Activated B cell treated with CpG ODN at 0.5 μM for 24 hours (primary cell): ENCODE measurements at regions of chr2 and their contacts with region 1.

Region 1: GRCh38 chr2:226906163-226906693 is 70.4 kb downstream of the RHBDD1 start:
- DNase-seq: no peak
- ATAC-seq: peak; percentile 84
- H3K4me3 Mint-ChIP-seq: peak overlapping the region; percentile 73
- H3K27ac Mint-ChIP-seq: peak overlapping the region; percentile 94
- H3K4me1 Mint-ChIP-seq: peaks cover 97% of the 10 kb centered on the region
- H3K27me3 Mint-ChIP-seq: no peaks in the 10 kb centered on the region
- CTCF ChIP-seq: no peak

Region 2: DNA sequence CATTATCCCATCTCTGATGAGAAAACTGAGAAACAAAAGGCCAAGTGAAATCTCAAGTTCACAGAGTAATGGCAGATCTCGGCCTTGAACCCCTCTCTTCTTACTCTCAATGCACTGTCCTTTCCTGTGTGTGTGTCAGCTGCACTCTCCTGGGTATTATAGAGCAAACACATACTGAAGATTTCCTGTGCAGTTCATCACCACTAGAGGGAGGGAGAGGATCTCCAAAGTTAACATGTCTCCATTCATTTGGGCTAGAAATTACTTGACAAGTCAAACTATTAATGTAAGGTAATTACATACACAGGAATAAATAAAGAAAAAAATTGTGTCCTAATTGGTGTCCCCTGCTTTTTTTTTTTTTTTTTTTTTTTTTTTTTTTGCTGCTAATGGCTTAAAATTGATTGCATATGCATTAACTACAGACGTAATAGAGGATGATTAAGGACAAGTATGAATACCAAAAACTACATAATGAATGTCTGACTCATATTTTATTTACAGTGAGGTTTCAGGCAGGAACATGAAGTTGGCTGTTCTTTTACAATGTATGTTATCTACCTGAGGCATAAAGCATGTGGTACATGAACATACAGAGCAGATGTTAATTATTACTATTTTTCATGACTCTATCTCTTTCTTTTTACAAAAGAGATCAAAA is 1237.5 kb before region 1 on chr2:
- CTCF ChIA-PET with region 1: no interaction called
- POLR2A ChIA-PET with region 1: no interaction called
- intact Hi-C with region 1: loop called (anchors 5 kb)
- DNase-seq: no peak
- ATAC-seq: peak; percentile 79
- H3K4me3 Mint-ChIP-seq: no peak overlapping the region
- H3K27ac Mint-ChIP-seq: no peak overlapping the region
- H3K4me1 Mint-ChIP-seq: no peaks in the 10 kb centered on the region
- H3K27me3 Mint-ChIP-seq: peaks cover 5% of the 10 kb centered on the region
- CTCF ChIP-seq: peak; percentile 29

Region 3: GRCh38 chr2:226835796-226836547 is 70.3 kb before region 1 on chr2 and contains the start of gene RHBDD1:
- CTCF ChIA-PET with region 1: interaction called, 5 read pairs
- POLR2A ChIA-PET with region 1: interaction called, 35 read pairs
- intact Hi-C with region 1: loop called (anchors 1 kb)
- DNase-seq: peak; percentile 93
- ATAC-seq: peak; percentile 86
- H3K4me3 Mint-ChIP-seq: peak within 1 kb of the TSS; percentile 90
- H3K27ac Mint-ChIP-seq: peak within 1 kb of the TSS; percentile 97
- H3K4me1 Mint-ChIP-seq: peaks cover 69% of the 10 kb centered on the region
- H3K27me3 Mint-ChIP-seq: no peaks in the 10 kb centered on the region
- CTCF ChIP-seq: no peak
- total RNA-seq, gene RHBDD1: 71.1 and 90.2 TPM in 2 replicates

Region 4: DNA sequence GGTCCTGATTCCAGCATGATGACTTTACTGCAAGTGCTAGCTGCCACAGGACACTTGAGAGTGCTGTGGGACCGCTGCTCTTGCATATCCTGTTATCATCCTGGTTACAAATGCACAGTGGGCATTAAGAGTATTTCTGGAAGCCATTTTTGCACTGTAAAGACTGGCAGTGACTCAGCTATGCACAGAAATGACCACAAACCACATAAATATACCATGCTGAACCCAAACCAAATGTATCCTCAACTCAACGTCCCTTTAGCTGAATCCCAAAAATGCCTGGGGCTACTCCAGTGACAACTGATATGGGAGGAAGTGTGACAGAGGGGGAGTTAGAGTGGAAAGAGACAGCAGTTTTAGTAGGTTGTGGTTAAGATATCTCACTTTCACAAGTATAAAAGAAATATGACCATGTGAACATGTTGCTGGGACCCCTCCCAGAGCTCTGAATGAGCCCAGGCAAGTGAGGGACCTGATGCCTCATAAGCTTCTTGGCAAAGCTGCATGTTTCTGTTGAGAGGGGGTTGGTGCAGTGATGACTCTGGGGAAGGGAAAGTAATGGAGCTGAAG is 33.1 kb before region 1 on chr2:
- CTCF ChIA-PET with region 1: no interaction called
- POLR2A ChIA-PET with region 1: interaction called, 3 read pairs
- intact Hi-C with region 1: loop called (anchors 5 kb)
- DNase-seq: no peak
- ATAC-seq: no peak
- H3K4me3 Mint-ChIP-seq: no peak overlapping the region
- H3K27ac Mint-ChIP-seq: no peak overlapping the region
- H3K4me1 Mint-ChIP-seq: peaks cover 34% of the 10 kb centered on the region
- H3K27me3 Mint-ChIP-seq: no peaks in the 10 kb centered on the region
- CTCF ChIP-seq: no peak

Region 5: GRCh38 chr2:226916669-226917068 is 10.4 kb after region 1 on chr2:
- CTCF ChIA-PET with region 1: no interaction called
- POLR2A ChIA-PET with region 1: interaction called, 4 read pairs
- intact Hi-C with region 1: loop called (anchors 1 kb)
- DNase-seq: no peak
- ATAC-seq: peak; percentile 57
- H3K4me3 Mint-ChIP-seq: peak overlapping the region; percentile 52
- H3K27ac Mint-ChIP-seq: peak overlapping the region; percentile 89
- H3K4me1 Mint-ChIP-seq: peaks cover 59% of the 10 kb centered on the region
- H3K27me3 Mint-ChIP-seq: no peaks in the 10 kb centered on the region
- CTCF ChIP-seq: no peak

Region 6: GRCh38 chr2:226984750-226985582 is 78.7 kb after region 1 on chr2:
- CTCF ChIA-PET with region 1: interaction called, 5 read pairs
- POLR2A ChIA-PET with region 1: interaction called, 22 read pairs
- intact Hi-C with region 1: no loop called
- DNase-seq: no peak
- ATAC-seq: peak; percentile 92
- H3K4me3 Mint-ChIP-seq: no peak overlapping the region
- H3K27ac Mint-ChIP-seq: peak overlapping the region; percentile 80
- H3K4me1 Mint-ChIP-seq: peaks cover 24% of the 10 kb centered on the region
- H3K27me3 Mint-ChIP-seq: no peaks in the 10 kb centered on the region
- CTCF ChIP-seq: peak; percentile 28

Region 7: GRCh38 chr2:226995625-226996041 is 89.4 kb after region 1 on chr2:
- CTCF ChIA-PET with region 1: no interaction called
- POLR2A ChIA-PET with region 1: no interaction called
- intact Hi-C with region 1: no loop called
- DNase-seq: no peak
- ATAC-seq: no peak
- H3K4me3 Mint-ChIP-seq: no peak overlapping the region
- H3K27ac Mint-ChIP-seq: no peak overlapping the region
- H3K4me1 Mint-ChIP-seq: no peaks in the 10 kb centered on the region
- H3K27me3 Mint-ChIP-seq: no peaks in the 10 kb centered on the region
- CTCF ChIP-seq: no peak

Region 8: DNA sequence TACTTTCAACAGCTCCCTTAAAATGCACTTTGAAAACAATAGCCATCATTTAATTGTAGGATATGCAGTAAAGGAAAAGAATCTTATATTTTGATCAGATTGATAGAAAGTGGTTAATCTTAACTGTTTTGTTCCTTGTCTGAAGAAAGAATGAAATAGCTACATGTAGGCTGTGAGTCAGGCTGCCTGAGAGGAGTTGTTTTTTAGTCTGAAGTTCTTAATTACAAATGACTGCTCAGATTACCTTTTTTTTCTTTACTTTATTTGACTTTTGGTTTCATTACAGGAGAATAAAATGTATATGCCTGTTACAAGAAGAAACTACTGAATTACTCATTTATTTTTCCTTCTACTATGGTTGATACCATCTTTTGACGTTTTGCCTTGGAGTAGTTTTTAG is 622.6 kb after region 1 on chr2:
- CTCF ChIA-PET with region 1: no interaction called
- POLR2A ChIA-PET with region 1: no interaction called
- intact Hi-C with region 1: no loop called
- DNase-seq: no peak
- ATAC-seq: no peak
- H3K4me3 Mint-ChIP-seq: no peak overlapping the region
- H3K27ac Mint-ChIP-seq: no peak overlapping the region
- H3K4me1 Mint-ChIP-seq: no peaks in the 10 kb centered on the region
- H3K27me3 Mint-ChIP-seq: no peaks in the 10 kb centered on the region
- CTCF ChIP-seq: no peak